ENCODE measurements at regions of chr15 and their contacts with region 1.

Region 1: GRCh38 chr15:92808978-92809879 is 90.9 kb upstream of the CHD2 start:
- DNase-seq: peak; percentile 99
- H3K4me3 Mint-ChIP-seq: peak overlapping the region; percentile 91
- H3K27ac Mint-ChIP-seq: peak overlapping the region; percentile 97
- H3K4me1 Mint-ChIP-seq: peaks cover 49% of the 10 kb centered on the region
- H3K27me3 Mint-ChIP-seq: no peaks in the 10 kb centered on the region

Region 2: GRCh38 chr15:92797168-92797951 is 11.9 kb before region 1 on chr15:
- CTCF ChIA-PET with region 1: interaction called, 46 read pairs
- POLR2A ChIA-PET with region 1: interaction called, 33 read pairs
- DNase-seq: no peak
- H3K4me3 Mint-ChIP-seq: no peak overlapping the region
- H3K27ac Mint-ChIP-seq: no peak overlapping the region
- H3K4me1 Mint-ChIP-seq: peaks cover 23% of the 10 kb centered on the region
- H3K27me3 Mint-ChIP-seq: no peaks in the 10 kb centered on the region

Region 3: DNA sequence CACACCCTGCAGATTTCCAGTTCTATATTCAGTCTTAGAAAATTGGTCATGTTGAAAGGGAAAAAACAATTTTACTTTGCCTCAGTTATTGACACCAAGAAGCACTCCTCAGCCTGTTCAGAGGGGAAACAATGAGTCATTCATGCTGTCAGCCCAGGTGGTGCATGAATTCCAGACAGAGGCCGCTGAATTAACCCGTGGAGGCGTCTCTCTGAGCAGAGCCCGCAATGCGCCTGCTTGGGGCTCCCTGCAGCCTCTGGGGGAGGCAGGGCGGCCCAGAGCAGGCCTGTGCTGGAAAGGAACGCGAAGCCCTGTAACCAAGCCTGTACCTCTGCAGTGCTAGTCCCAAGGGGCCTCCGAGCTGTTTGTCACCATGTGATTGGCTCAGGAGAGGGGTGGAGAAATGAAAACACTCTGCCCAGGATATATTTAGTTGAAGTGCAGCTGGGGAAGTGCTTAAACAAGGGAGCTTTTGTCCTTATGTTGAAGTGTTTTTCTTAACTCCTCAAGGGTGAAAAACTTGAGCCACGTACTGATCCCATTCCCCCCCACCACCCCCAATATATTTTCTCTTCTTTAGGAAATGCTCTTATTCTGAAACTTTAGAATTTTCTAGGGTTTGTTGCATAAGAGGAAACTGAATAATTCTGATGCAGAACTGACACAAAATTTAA is 22.6 kb after region 1 on chr15:
- CTCF ChIA-PET with region 1: interaction called, 65 read pairs
- POLR2A ChIA-PET with region 1: interaction called, 239 read pairs
- DNase-seq: peak; percentile 93
- H3K4me3 Mint-ChIP-seq: peak overlapping the region; percentile 60
- H3K27ac Mint-ChIP-seq: peak overlapping the region; percentile 94
- H3K4me1 Mint-ChIP-seq: peaks cover 53% of the 10 kb centered on the region
- H3K27me3 Mint-ChIP-seq: no peaks in the 10 kb centered on the region

Region 4: GRCh38 chr15:92845126-92845508 is 35.9 kb after region 1 on chr15:
- CTCF ChIA-PET with region 1: interaction called, 3 read pairs
- POLR2A ChIA-PET with region 1: interaction called, 38 read pairs
- DNase-seq: no peak
- H3K4me3 Mint-ChIP-seq: peak overlapping the region; percentile 58
- H3K27ac Mint-ChIP-seq: peak overlapping the region; percentile 96
- H3K4me1 Mint-ChIP-seq: peaks cover 61% of the 10 kb centered on the region
- H3K27me3 Mint-ChIP-seq: no peaks in the 10 kb centered on the region

Region 5: DNA sequence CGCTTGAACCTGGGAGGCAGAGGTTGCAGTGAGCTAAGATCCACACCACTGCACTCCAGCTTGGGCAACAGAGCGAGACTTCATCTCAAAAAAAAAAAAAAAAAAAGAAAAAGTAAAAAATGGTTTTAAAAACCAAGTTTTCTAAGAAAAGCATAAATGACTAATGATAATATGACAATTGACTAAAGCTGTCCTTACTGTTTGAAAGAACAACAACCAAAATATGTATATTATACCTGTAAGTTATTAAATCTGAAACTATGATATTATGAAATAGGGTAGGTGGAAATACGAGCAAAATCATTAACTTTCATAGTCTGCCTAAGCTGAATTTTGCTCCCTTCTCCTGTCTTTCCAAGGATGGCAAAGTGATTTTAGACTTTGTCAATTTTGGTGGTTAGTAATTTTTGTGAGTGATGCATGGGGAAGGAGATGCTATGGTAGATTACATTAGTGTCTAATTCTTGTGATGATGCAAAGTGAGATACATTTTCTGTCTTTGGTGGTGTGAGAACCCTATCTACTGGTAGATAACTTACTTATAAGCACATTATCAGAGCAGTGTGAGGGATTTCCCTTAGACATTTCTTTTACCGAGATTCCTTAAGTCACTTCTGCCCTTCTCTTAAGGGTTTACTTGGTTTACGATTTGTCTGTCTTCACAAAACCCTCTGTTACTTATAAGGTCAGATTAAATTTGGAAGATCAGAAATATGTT is 80.3 kb after region 1 on chr15:
- CTCF ChIA-PET with region 1: interaction called, 114 read pairs
- POLR2A ChIA-PET with region 1: interaction called, 914 read pairs
- DNase-seq: no peak
- H3K4me3 Mint-ChIP-seq: peak overlapping the region; percentile 67
- H3K27ac Mint-ChIP-seq: peak overlapping the region; percentile 82
- H3K4me1 Mint-ChIP-seq: peaks cover 70% of the 10 kb centered on the region
- H3K27me3 Mint-ChIP-seq: no peaks in the 10 kb centered on the region

Region 6: DNA sequence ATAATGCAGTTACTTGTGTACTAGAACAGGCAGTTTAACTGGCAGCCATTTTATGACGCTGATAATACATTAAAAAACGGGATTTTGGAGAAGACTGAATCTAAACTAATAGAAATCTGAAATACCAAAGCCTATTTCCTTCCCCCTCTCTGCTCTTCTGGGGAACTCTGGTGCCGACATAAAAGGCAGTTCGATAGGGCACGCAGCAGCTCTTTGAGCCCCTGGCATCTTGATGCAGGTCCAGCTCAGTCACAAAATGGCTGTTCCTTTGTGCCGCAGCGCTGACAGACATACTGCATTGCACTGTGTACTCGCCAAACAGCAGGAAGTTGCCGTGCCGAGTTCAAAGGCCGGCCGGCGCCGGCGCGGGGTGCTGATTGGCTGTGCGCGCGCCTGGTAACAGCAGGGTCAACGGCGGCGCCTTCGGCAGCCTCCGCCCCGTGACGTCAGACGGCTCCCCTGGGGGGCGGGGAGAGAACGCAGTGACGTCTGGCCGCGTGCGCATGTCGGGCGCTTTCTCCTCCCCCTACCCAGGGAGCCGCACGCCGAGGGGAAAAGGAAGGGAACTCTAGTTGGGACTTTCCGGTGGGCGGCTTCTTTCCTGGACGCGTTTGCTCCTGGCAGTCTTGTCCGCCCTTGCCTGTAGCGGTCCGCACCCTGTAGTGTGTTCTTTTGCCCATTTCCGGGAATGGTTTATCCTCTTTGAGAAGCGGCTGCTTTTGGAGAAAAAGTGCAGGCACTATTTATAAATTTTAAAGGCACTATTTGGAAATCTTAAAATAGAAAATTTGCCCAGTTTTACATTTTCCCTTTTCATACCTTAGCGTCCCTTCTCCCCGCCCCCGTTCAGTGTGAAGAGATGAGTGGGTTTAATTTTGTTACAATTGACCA is 95.0 kb after region 1 on chr15:
- CTCF ChIA-PET with region 1: interaction called, 116 read pairs
- POLR2A ChIA-PET with region 1: interaction called, 678 read pairs
- DNase-seq: peak; percentile 100
- H3K4me3 Mint-ChIP-seq: peak overlapping the region; percentile 92
- H3K27ac Mint-ChIP-seq: peak overlapping the region; percentile 100
- H3K4me1 Mint-ChIP-seq: peaks cover 55% of the 10 kb centered on the region
- H3K27me3 Mint-ChIP-seq: no peaks in the 10 kb centered on the region

Region 7: GRCh38 chr15:92924216-92924615 is 115.0 kb after region 1 on chr15:
- CTCF ChIA-PET with region 1: interaction called, 15 read pairs
- POLR2A ChIA-PET with region 1: interaction called, 326 read pairs
- DNase-seq: no peak
- H3K4me3 Mint-ChIP-seq: no peak overlapping the region
- H3K27ac Mint-ChIP-seq: peak overlapping the region; percentile 11
- H3K4me1 Mint-ChIP-seq: peaks cover 75% of the 10 kb centered on the region
- H3K27me3 Mint-ChIP-seq: no peaks in the 10 kb centered on the region

Measured in activated CD4-positive, alpha-beta memory T cell treated with anti-CD3 and anti-CD28 coated beads, Interleukin-2, amount 10 ng/mL, durations not matched to agents 7 days and 5 days (primary cell).